Panc1 (cell line): ENCODE measurements at regions of chr2 and their contacts with region 1.

Region 1: GRCh38 chr2:158890296-158890905 is 78.0 kb upstream of the TANC1 start:
- DNase-seq: no peak
- ATAC-seq: no peak
- H3K4me3 ChIP-seq: no peak overlapping the region
- H3K27ac ChIP-seq: no peak overlapping the region
- H3K4me1 ChIP-seq: no peaks in the 10 kb centered on the region
- H3K27me3 ChIP-seq: peaks cover 2% of the 10 kb centered on the region; the same call in 1 of the 2 replicates
- CTCF ChIP-seq: no peak

Region 2: GRCh38 chr2:158473719-158474392 is 416.5 kb before region 1 on chr2:
- CTCF ChIA-PET with region 1: no interaction called
- POLR2A ChIA-PET with region 1: no interaction called
- in situ Hi-C with region 1: no loop called
- intact Hi-C with region 1: no loop called
- DNase-seq: no peak
- ATAC-seq: no peak
- H3K4me3 ChIP-seq: no peak overlapping the region
- H3K27ac ChIP-seq: no peak overlapping the region
- H3K4me1 ChIP-seq: no peaks in the 10 kb centered on the region
- H3K27me3 ChIP-seq: no peaks in the 10 kb centered on the region
- CTCF ChIP-seq: peak; percentile 42; the same call in 1 of the 2 replicates

Region 3: DNA sequence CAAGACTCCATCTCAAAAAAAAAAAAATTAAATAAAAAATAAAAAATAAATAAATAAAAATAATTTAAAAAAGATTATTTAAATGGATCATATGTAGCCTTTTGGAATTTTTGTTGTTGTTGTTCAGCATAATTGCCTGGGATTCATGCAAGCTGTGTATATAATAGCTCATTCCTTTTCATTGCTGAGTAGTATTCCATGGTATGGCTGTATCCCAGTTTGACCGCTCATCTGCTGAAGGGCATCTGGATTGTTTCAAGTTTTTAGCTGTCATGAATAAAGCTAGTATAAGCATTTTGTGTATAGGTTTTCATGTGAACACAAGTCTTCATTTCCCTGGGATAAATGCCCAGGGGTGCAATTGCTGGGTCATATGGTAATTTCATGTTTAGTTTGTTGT is 71.7 kb after region 1 on chr2:
- CTCF ChIA-PET with region 1: no interaction called
- POLR2A ChIA-PET with region 1: interaction called, 10 read pairs
- in situ Hi-C with region 1: no loop called
- intact Hi-C with region 1: no loop called
- DNase-seq: no peak
- ATAC-seq: no peak
- H3K4me3 ChIP-seq: no peak overlapping the region
- H3K27ac ChIP-seq: no peak overlapping the region
- H3K4me1 ChIP-seq: peaks cover 9% of the 10 kb centered on the region
- H3K27me3 ChIP-seq: no peaks in the 10 kb centered on the region
- CTCF ChIP-seq: no peak

Region 4: GRCh38 chr2:159064446-159065301 is 174.3 kb after region 1 on chr2:
- CTCF ChIA-PET with region 1: no interaction called
- POLR2A ChIA-PET with region 1: no interaction called
- in situ Hi-C with region 1: no loop called
- intact Hi-C with region 1: no loop called
- DNase-seq: no peak
- ATAC-seq: peak; percentile 63; the same call in 1 of the 2 replicates
- H3K4me3 ChIP-seq: no peak overlapping the region
- H3K27ac ChIP-seq: peak overlapping the region; percentile 74
- H3K4me1 ChIP-seq: peaks cover 36% of the 10 kb centered on the region
- H3K27me3 ChIP-seq: no peaks in the 10 kb centered on the region
- CTCF ChIP-seq: no peak